ENCODE measurements at regions of chr17 and their contacts with region 1.

Region 1: DNA sequence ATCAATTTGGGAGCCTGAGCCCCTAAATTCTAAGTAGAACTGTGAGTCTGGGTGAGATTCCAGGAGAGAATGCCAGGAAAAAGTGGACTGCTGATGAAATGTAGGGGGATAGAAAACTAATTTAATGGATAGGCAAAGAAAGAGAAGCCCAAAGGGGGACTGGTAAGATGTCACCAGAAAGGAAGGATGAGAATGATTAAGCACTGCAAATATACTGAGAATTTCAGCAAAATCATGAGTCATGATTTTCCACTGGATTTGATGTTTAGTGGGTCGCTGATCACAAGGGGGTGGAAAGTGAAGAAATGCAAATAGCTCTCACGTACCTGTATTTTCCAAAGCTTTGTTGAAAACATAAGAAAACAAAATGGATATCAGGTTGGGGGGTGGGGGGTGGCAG is 201.8 kb downstream of the SLC39A11 start:
- DNase-seq: no peak
- ATAC-seq: no peak
- H3K4me3 ChIP-seq: no peak overlapping the region
- H3K27ac ChIP-seq: no peak overlapping the region
- H3K4me1 ChIP-seq: no peaks in the 10 kb centered on the region
- H3K27me3 ChIP-seq: no peaks in the 10 kb centered on the region
- CTCF ChIP-seq: no peak

Region 2: GRCh38 chr17:72764632-72765041 is 126.1 kb before region 1 on chr17:
- CTCF ChIA-PET with region 1: no interaction called
- POLR2A ChIA-PET with region 1: interaction called, 11 read pairs
- in situ Hi-C with region 1: no loop called
- intact Hi-C with region 1: no loop called
- DNase-seq: no peak
- ATAC-seq: no peak
- H3K4me3 ChIP-seq: no peak overlapping the region
- H3K27ac ChIP-seq: no peak overlapping the region
- H3K4me1 ChIP-seq: no peaks in the 10 kb centered on the region
- H3K27me3 ChIP-seq: no peaks in the 10 kb centered on the region
- CTCF ChIP-seq: no peak

Region 3: GRCh38 chr17:72985881-72986720 is 95.4 kb after region 1 on chr17:
- CTCF ChIA-PET with region 1: no interaction called
- POLR2A ChIA-PET with region 1: no interaction called
- in situ Hi-C with region 1: no loop called
- intact Hi-C with region 1: no loop called
- DNase-seq: peak; percentile 53
- ATAC-seq: peak; percentile 85
- H3K4me3 ChIP-seq: no peak overlapping the region
- H3K27ac ChIP-seq: no peak overlapping the region
- H3K4me1 ChIP-seq: no peaks in the 10 kb centered on the region
- H3K27me3 ChIP-seq: no peaks in the 10 kb centered on the region
- CTCF ChIP-seq: peak; percentile 91

Measured in Panc1 (cell line).